ENCODE measurements at regions of chr20 and their contacts with region 1.

Region 1: DNA sequence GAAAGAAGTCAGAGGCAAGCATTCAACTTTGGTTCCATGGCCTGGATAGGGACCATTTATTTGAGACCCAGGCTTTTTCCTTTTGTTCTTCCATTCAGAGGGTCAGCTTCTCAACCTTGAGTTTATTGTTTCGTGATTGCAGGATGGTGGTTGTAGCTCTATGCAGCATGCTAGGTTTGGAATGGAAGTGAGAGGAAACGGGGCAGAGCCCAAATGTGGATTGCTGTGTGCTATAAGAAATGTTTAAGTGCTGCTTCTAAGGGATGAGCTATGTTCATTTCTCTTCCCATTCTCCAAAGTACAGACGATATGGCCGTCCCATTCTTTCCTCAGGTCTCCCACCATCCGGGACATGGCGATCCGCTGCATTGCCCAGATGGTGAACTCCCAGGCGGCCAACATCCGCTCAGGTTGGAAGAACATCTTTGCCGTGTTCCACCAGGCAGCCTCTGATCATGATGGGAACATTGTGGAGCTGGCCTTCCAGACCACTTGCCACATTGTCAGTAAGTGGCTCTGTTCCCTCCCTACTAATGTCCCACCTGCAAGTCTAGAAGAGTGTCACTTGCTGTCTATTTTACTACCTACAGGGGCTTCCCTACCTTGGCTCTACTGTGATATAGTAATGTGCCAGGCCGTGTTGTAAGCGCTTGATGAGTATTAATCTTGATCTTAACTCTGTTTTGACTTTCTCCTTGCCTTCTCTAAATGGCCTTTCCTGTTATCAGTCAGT is 36.0 kb upstream of the CSE1L start:
- DNase-seq: no peak
- ATAC-seq: no peak

Region 2: GRCh38 chr20:48912065-48912762 is 97.9 kb before region 1 on chr20:
- intact Hi-C with region 1: no loop called
- DNase-seq: no peak
- ATAC-seq: no peak

Region 3: DNA sequence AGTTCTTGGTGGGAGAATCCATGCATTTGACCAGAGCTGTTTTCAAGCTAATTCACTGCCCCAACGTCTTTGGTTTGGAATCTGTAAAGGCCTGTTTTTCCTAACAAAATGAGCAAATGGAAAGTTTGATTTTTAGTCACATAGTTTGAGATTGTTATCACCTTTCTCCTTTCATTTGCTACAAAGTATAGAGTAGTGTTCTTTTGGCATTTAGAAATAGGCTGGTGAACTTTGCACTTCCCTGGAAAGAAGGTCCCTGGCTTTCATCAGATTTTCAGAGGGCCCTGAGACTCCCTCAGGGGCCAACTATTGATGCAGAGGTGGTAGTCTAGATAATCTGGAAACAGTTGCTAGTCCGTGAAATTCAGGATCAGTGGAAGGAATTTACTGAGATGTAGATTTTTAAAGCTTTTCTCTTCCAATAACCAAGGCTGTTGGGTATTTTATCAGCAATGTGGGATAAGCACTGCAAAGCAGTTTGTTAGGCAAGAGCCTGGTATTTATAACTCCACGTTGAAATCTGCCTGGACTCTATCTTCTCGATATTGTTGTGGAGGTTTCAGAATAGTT is 86.8 kb before region 1 on chr20:
- intact Hi-C with region 1: no loop called
- DNase-seq: no peak
- ATAC-seq: no peak

Region 4: GRCh38 chr20:49078296-49078695 is 68.2 kb after region 1 on chr20:
- intact Hi-C with region 1: loop called (anchors 10 kb)
- DNase-seq: no peak
- ATAC-seq: no peak

Region 5: GRCh38 chr20:49199729-49200293 is 189.7 kb after region 1 on chr20:
- intact Hi-C with region 1: no loop called
- DNase-seq: no peak
- ATAC-seq: no peak